Natural killer cell (primary cell): ENCODE measurements at regions of chr17 and their contacts with region 1.

Region 1: GRCh38 chr17:1628856-1629646 is 417 bp upstream of the SLC43A2 start:
- DNase-seq: peak; percentile 90 to 91
- ATAC-seq: peak; percentile 77 to 92 (median 83)
- H3K4me3 ChIP-seq: peak overlapping the region; percentile 66
- H3K4me3 Mint-ChIP-seq: peak overlapping the region; percentile 99
- H3K27ac ChIP-seq: peak overlapping the region; percentile 90
- H3K27ac Mint-ChIP-seq: peak overlapping the region; percentile 95 to 99
- H3K4me1 ChIP-seq: peaks cover 36% of the 10 kb centered on the region
- H3K4me1 Mint-ChIP-seq: peaks cover 16 to 38% of the 10 kb centered on the region in 2 donors
- H3K27me3 ChIP-seq: no peaks in the 10 kb centered on the region
- H3K27me3 Mint-ChIP-seq: peaks cover 7 to 20% of the 10 kb centered on the region in 2 donors
- CTCF ChIP-seq: no peak

Region 2: GRCh38 chr17:1365445-1366039 is 263.5 kb before region 1 on chr17:
- intact Hi-C with region 1: loop called (anchors 5 kb)
- DNase-seq: peak; percentile 44 to 88
- ATAC-seq: peak; percentile 80 to 90 (median 84)
- H3K4me3 ChIP-seq: no peak overlapping the region
- H3K4me3 Mint-ChIP-seq: peak overlapping the region; percentile 9
- H3K27ac ChIP-seq: peak overlapping the region; percentile 45
- H3K27ac Mint-ChIP-seq: peak overlapping the region; percentile 60 to 72
- H3K4me1 ChIP-seq: peaks cover 38% of the 10 kb centered on the region
- H3K4me1 Mint-ChIP-seq: peaks cover 48 to 58% of the 10 kb centered on the region in 2 donors
- H3K27me3 ChIP-seq: no peaks in the 10 kb centered on the region
- H3K27me3 Mint-ChIP-seq: no peaks in the 10 kb centered on the region
- CTCF ChIP-seq: peak; percentile 80

Region 3: DNA sequence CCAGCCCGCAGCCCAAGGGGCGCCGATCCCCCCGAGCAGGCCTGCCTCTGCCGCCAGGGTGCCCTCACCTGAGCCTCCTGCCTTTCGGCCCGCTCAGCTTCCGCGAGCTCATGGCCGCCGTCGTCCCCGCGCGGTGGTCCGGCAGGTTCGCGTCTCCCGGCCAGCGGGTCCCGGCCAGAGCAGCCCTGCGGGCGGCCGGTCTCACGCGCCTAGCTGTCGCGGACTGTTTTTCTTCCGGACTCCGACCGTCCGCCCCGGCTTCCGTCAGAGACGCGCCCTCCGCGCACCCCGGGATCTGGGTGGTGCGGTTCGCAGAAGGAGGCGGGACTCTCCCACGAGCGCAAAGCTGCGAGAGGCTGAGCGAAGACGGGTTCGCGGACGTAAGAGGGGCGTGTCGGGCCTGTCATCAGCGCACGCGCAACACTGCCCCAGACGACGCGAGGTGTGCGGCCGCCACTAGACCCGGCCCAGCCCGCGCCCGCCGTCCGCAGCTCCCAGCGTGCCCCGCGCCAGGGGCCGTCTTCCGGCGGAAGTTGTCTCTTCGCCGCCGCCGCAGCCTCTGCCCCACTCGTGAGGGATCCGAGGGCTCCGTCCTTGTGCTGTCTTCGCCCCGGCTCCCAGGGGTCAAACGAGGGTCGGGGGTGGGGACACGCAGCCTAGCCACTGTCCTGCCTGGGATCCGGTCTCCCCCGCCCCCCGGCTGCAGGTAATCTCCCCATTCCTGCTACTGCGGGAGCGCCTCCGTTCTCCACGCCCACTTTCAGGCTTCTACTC is 112.5 kb before region 1 on chr17 and contains the start of gene INPP5K:
- intact Hi-C with region 1: loop called (anchors 5 kb)
- DNase-seq: peak; percentile 97 to 100
- ATAC-seq: peak; percentile 89 to 98 (median 89)
- H3K4me3 ChIP-seq: peak within 1 kb of the TSS; percentile 96
- H3K4me3 Mint-ChIP-seq: peak within 1 kb of the TSS; percentile 95
- H3K27ac ChIP-seq: peak within 1 kb of the TSS; percentile 78
- H3K27ac Mint-ChIP-seq: peak within 1 kb of the TSS; percentile 89 to 94
- H3K4me1 ChIP-seq: peaks cover 25% of the 10 kb centered on the region
- H3K4me1 Mint-ChIP-seq: peaks cover 11 to 23% of the 10 kb centered on the region in 2 donors
- H3K27me3 ChIP-seq: no peaks in the 10 kb centered on the region
- H3K27me3 Mint-ChIP-seq: no peaks in the 10 kb centered on the region
- CTCF ChIP-seq: no peak
- total RNA-seq, gene INPP5K: 278 to 317 (median 292) TPM

Region 4: GRCh38 chr17:1561400-1562175 is 67.5 kb before region 1 on chr17:
- intact Hi-C with region 1: loop called (anchors 1 kb)
- DNase-seq: peak; percentile 33 to 63
- ATAC-seq: peak; percentile 24 to 39 (median 30)
- H3K4me3 ChIP-seq: peak overlapping the region; percentile 23
- H3K4me3 Mint-ChIP-seq: peak overlapping the region; percentile 81
- H3K27ac ChIP-seq: no peak overlapping the region
- H3K27ac Mint-ChIP-seq: peak overlapping the region; percentile 63 to 84
- H3K4me1 ChIP-seq: peaks cover 23% of the 10 kb centered on the region
- H3K4me1 Mint-ChIP-seq: peaks cover 34 to 43% of the 10 kb centered on the region in 2 donors
- H3K27me3 ChIP-seq: no peaks in the 10 kb centered on the region
- H3K27me3 Mint-ChIP-seq: no peaks in the 10 kb centered on the region
- CTCF ChIP-seq: peak; percentile 29

Region 5: DNA sequence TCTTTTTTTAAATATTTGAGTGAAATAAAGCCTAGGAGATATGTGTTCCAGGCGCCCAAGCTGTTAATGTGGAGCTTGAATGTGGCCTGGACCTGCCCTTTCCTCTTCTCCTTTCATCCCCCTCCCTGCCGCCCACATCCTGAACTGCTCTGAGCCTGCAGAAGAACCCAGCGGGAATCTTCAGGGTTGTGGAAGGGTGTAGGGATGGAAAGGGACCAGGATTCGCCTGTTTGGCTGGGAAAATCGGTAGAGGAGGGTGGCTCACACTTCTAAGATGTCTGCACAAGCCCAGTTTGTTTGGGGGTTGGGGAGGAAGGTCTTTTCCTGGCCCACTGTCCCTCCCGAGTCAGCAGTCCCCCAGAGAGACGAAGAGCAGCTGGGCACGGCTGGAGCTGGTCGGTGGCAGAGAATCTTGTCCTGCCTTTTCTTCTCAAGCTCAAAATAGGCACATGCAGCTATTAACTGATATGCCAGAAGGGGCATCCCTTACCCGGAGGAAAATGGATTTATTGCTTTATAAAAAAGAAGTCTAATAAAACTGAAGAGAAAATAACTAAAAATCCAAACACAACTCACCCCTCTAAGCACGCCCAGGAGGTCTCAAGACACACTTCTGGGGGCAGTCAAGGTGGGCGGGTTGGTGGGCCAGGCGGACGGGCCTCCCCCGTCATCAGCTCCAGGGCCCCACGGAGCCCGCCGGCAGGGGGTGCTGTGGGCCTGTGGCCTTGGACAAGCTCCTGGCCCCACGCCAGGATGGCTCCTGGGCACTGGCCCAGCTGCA is 54.9 kb before region 1 on chr17:
- intact Hi-C with region 1: loop called (anchors 2 kb)
- DNase-seq: peak; percentile 68 to 71
- ATAC-seq: peak; percentile 73 to 78 (median 75)
- H3K4me3 ChIP-seq: no peak overlapping the region
- H3K4me3 Mint-ChIP-seq: no peak overlapping the region
- H3K27ac ChIP-seq: no peak overlapping the region
- H3K27ac Mint-ChIP-seq: no peak overlapping the region
- H3K4me1 ChIP-seq: peaks cover 28% of the 10 kb centered on the region
- H3K4me1 Mint-ChIP-seq: peaks cover 0 to 6% of the 10 kb centered on the region in 2 donors
- H3K27me3 ChIP-seq: no peaks in the 10 kb centered on the region
- H3K27me3 Mint-ChIP-seq: no peaks in the 10 kb centered on the region
- CTCF ChIP-seq: peak; percentile 65

Region 6: DNA sequence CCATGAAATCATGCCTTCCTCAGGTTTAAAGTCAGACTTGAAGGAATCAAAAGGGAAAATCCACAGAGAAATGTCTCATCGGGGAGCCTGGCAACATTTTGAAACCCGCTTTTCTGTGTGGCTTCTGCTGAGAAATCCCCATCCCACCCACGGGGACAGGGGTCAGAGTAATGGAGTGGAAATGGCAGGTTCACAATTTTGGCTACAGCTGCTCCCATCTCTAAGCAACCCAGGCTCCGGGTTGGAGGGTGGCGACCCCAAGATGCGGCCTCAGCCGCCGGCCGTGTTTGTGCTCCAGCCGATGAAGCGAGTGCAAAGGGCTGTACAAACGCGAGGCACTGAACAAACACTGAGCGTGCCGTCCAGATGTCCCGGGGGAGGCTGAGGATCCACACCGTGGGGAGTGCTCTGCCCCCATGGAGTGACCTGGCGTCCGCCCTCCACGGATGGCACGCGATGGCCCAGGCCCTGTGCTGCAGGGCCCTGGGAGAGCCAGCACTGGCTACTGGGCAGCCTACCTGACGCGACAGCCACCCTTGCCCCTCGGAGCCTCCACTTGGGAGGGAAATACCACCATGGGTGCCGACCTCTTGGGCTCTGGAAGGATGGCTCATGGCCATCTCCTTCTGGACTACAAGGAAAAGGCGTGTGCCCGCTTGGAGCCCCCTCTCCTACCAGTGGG is 22.6 kb before region 1 on chr17:
- intact Hi-C with region 1: loop called (anchors 2 kb)
- DNase-seq: no peak
- ATAC-seq: no peak
- H3K4me3 ChIP-seq: no peak overlapping the region
- H3K4me3 Mint-ChIP-seq: no peak overlapping the region
- H3K27ac ChIP-seq: peak overlapping the region; percentile 47
- H3K27ac Mint-ChIP-seq: peak overlapping the region; percentile 83 to 91
- H3K4me1 ChIP-seq: peaks cover 27% of the 10 kb centered on the region
- H3K4me1 Mint-ChIP-seq: peaks cover 6 to 26% of the 10 kb centered on the region in 2 donors
- H3K27me3 ChIP-seq: no peaks in the 10 kb centered on the region
- H3K27me3 Mint-ChIP-seq: no peaks in the 10 kb centered on the region
- CTCF ChIP-seq: no peak